Cardiac septum (tissue), 1 donor: ENCODE measurements at regions of chr14 and their contacts with region 1.

Region 1: DNA sequence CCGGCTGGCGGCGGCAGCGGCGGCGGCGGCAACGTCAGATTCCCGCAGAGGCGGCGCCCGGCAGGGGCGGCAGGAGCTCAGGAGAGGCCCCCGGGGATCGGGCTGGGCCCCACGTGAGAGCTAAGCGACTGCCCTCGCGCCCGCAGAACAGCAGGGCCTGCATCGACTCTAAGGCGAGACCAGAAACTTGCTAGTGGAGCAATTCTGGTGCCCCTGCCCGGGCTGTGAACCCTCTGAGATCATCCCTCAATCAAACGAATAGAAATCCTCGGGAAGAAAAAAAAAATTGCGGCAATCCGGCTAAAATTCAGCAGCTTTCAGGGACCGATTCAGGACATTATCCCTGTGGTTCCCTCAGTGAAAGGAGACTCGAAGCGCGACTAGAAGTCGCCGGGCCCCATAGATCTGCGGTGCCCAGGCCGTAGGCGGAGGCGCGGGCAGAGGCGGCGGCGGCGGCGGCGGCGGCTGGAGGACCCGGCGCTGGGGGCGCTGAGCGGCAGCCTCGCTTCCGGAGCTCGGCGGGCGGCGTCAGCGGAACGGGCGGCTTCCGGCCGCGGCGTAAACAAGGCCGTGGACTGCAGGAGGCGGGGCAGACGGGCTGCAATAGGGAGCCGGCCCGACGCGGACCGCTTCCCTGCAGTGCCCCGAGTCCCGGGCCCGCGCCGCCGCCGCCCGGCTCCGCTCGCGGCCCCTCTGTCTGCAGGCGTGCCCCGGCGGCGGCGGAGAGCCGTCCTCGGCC is at the start of gene KLHDC2:
- DNase-seq: peak; percentile 95
- total RNA-seq, gene KLHDC2: 77.2 TPM

Region 2: GRCh38 chr14:49692811-49693734 is 74.7 kb before region 1 on chr14 and contains the start of gene KLHDC1:
- intact Hi-C with region 1: loop called (anchors 2 kb)
- DNase-seq: peak; percentile 94
- total RNA-seq, gene KLHDC1: 6.6 TPM